Posterior vena cava (tissue), 2 donors: ENCODE measurements at regions of chr2 and their contacts with region 1.

Region 1: DNA sequence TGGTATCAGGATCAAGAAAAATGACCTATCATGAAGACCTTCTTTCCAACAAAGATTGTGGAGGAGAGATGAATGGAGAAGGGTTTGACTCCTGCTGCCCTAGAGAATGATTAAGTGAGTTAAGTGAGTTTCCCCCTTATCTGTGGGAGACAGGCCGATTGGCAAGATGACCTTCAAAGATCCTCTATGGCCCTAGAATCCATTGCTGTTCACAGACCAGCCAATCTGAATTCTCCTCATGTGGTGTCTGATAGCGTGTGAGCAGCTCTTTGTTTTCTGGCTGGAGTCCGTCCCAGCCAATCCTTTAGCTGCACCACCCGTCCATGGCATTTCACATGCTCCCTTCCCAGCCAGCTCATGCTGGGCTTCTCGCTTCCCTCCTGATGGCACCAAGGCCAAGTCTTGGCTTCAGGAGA is 79.4 kb downstream of the MARCHF4 start:
- DNase-seq: no peak

Region 2: DNA sequence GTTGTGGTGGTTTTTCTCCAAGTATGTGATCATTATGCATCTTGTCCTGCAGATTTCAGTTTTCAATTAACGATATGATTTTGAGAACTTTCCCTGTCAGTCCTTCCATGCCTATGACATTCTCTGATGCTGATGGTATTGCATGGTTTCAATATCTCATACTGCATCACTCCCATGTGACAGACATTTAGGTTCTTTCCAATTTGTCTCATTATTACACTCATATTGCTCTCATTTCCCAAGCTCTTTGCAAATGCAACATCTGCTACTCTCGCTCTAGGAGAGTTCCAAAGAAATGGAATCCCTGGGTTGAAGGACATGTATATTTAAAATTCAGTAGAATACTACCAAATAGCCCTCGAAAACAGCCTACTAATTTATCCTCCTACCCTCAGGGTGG is 46.1 kb before region 1 on chr2:
- intact Hi-C with region 1: loop called in 1 of 2 experiments (anchors 1 kb)
- DNase-seq: no peak